Tibial artery (tissue), 4 donors: ENCODE measurements at regions of chr3 and their contacts with region 1.

Region 1: DNA sequence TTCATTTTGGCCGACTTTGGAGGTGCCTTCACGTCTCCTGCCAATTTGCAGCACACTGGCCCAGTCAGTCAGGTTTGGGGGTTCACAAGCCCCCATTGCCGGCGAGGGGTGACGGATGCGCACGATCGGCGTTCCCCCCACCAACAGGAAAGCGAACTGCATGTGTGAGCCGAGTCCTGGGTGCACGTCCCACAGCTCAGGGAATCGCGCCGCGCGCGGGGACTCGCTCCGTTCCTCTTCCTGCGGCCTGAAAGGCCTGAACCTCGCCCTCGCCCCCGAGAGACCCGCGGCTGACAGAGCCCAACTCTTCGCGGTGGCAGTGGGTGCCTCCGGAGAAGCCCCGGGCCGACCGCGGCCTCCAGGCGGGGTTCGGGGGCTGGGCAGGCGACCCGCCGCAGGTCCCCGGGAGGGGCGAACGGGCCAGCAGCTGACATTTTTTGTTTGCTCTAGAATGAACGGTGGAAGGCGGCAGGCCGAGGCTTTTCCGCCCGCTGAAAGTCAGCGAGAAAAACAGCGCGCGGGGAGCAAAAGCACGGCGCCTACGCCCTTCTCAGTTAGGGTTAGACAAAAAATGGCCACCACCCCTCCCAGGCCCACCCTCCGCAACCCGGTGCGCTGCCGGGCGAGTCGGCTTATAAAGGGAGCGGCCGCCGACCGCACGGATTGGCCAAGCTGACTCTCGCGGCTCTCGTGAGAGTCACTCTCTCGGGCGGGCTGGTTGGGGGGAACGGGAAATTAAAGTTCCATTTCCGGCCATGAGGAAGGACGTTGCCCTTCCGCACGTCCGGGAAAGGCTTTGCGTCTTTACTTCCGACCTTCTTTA is at the start of gene TERC:
- DNase-seq: peak; percentile 92 to 96
- H3K4me3 ChIP-seq: peak within 1 kb of the TSS; percentile 71 to 86
- H3K27ac ChIP-seq: peak within 1 kb of the TSS; percentile 94 to 96
- H3K4me1 ChIP-seq: peaks cover 0 to 10% (median 5%) of the 10 kb centered on the region in 4 donors
- H3K27me3 ChIP-seq: no peaks in the 10 kb centered on the region
- CTCF ChIP-seq: peak; percentile 10 to 12

Region 2: GRCh38 chr3:169604568-169604967 is 160.1 kb before region 1 on chr3:
- intact Hi-C with region 1: no loop called
- DNase-seq: no peak
- H3K4me3 ChIP-seq: no peak overlapping the region
- H3K27ac ChIP-seq: no peak overlapping the region
- H3K4me1 ChIP-seq: no peaks in the 10 kb centered on the region
- H3K27me3 ChIP-seq: no peaks in the 10 kb centered on the region
- CTCF ChIP-seq: no peak

Region 3: DNA sequence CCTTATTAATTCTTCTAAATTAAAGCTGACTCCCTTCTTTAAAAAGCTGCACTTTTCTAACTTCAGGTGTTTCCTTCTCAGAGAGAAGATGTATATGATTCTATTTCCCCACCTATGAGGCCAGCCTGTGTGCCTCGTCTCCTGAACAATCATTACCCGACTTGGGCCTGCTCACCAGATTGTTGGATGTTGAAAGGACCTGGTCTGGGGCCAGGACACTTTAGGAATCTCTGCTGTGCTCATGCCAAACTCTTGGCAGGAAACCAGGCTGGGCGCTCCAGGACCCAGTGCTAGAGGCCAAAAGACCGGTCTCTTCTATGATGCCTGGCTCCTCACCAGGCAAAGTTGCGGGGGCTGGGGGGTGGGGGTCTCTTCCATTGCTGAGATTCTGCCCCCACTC is 122.0 kb after region 1 on chr3:
- intact Hi-C with region 1: no loop called
- DNase-seq: peak; percentile 62 to 85
- H3K4me3 ChIP-seq: no peak overlapping the region
- H3K27ac ChIP-seq: no peak overlapping the region
- H3K4me1 ChIP-seq: peaks cover 0 to 14% (median 5%) of the 10 kb centered on the region in 4 donors
- H3K27me3 ChIP-seq: no peaks in the 10 kb centered on the region
- CTCF ChIP-seq: no peak

Region 4: DNA sequence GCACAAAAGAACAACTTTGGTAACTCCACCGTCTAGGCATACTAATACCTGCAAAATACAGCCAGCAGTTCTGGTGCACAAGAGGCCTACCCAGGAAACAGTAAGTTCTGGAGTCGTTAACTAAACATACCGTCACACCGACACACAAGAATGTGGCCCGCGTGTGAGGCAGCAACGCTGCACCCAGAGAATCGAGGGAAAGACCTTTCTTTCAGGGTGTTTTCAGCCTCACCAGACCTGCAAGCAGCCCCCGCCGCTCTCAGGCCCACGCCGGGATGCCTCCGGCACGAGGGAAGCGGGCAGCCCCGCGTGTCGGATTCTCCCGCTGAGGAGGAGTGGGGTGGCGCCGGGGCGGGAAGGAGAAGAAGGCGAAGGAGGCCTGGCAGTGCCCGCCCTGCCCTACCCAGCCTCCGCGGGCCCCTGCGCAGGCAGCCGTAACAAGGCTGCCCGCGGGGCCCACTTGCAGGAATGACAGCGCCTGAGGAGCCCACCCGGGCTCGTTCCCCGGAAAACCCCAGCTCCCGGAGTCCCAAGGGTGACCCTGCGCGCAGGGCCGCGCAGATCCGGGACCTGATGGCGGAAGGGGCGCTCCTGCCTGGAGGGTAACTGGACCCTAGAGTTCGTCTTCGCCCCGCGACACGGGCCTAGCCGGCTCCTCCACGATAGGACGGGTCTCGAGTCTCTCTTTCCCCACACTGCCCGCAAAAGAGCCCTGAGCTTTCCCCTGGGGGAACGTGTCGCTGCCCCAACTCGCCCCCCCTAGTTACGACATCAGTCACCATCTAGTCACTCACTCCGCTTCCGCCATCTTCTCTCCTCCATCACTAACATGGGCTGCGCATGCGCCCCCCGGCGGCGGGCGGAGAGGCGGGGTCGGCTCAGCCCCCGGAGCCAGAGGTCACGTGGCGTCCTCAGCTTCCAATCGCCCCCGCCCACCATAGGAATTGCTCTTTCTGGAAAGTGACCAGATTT is 416.5 kb after region 1 on chr3 and contains the start of gene PHC3:
- intact Hi-C with region 1: loop called (anchors 10 kb)
- DNase-seq: peak; percentile 94 to 96
- H3K4me3 ChIP-seq: peak within 1 kb of the TSS; percentile 82 to 83
- H3K27ac ChIP-seq: peak within 1 kb of the TSS; percentile 96
- H3K4me1 ChIP-seq: peaks cover 0 to 40% (median 13%) of the 10 kb centered on the region in 4 donors
- H3K27me3 ChIP-seq: no peaks in the 10 kb centered on the region
- CTCF ChIP-seq: no peak

Region 5: DNA sequence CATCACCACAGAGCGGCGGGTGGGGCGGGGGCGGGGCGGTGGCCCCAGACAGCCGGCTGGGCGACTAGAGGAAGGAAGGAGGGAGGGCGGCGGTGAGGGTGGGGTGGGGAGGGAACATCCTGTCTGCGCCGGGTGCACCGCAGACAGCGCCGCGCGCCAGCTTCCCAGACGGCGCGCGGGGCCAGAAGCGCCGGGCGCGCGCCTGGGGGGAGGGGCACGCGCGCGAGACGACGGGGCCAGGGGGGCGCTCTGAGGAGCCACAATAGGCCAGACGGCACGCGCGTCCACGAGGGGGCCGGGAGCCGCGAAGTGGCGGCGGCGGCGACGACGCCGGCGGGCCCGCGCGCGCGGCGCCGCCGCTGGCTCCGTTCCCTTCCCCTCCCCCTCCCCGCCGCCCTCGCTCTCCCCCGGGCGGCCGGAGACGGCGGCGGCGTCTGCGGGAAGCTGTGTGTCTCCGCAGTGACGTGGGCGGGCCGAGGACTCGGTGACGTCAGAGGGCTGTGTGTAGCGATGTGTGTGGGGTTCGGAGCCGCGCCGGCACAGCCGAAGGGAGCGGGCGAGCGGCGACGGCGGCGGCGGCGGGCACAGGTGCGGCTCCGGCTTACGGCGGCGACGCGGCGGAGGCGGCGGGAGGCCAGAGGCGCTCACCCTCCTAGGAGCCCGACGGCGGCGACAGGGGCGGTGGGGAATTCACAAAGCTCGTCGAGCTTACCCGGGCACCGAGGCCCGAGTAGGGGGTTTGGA is 592.7 kb after region 1 on chr3 and contains the start of gene SKIL:
- intact Hi-C with region 1: loop called (anchors 10 kb)
- DNase-seq: peak; percentile 99
- H3K4me3 ChIP-seq: peak within 1 kb of the TSS; percentile 94 to 98
- H3K27ac ChIP-seq: peak within 1 kb of the TSS; percentile 98 to 100
- H3K4me1 ChIP-seq: peaks cover 0 to 47% (median 27%) of the 10 kb centered on the region in 4 donors
- H3K27me3 ChIP-seq: no peaks in the 10 kb centered on the region
- CTCF ChIP-seq: peak; percentile 6 to 45